ENCODE measurements at regions of chr6 and their contacts with region 1.

Region 1: DNA sequence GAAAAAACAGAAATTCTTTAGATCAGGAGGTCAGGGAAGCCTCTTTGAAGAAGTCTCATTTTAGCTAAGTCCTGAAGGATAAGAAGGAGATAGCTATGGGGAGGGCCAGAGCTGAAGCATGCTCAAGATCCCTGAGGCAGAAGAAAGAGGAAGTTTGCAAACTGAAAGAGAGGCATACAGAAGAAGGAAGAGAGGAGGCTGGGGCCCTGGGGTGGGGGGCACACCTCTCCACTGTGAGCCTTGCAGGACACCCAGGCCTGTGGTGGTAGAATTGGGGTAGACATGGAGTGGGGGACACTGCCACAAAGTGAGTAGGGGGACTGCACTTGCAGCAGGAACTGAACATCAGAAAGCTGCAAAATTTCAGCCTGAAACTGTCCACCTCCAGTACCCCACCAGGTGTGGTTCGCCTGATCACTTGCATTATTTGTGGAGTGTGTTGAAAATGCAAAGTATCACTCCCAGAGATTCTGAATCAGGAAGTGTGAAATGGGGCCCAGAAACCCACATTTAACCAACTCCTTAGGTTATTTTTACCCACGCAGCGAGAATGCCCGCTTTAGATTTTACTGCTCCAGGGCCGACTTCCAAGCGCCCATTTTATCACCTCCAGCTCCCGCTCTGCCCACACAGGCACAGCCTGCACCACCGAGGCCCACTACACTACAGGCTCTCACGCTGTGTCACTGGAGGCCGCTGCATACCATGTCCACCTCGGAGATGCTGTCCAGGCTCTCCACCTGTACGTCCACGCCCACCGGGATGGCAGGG is 44.0 kb downstream of the GABRR2 start:
- DNase-seq: peak; percentile 60
- H3K4me3 ChIP-seq: peak overlapping the region; percentile 11
- H3K27ac ChIP-seq: peak overlapping the region; percentile 8
- H3K4me1 ChIP-seq: peaks cover 23% of the 10 kb centered on the region
- CTCF ChIP-seq: no peak

Region 2: DNA sequence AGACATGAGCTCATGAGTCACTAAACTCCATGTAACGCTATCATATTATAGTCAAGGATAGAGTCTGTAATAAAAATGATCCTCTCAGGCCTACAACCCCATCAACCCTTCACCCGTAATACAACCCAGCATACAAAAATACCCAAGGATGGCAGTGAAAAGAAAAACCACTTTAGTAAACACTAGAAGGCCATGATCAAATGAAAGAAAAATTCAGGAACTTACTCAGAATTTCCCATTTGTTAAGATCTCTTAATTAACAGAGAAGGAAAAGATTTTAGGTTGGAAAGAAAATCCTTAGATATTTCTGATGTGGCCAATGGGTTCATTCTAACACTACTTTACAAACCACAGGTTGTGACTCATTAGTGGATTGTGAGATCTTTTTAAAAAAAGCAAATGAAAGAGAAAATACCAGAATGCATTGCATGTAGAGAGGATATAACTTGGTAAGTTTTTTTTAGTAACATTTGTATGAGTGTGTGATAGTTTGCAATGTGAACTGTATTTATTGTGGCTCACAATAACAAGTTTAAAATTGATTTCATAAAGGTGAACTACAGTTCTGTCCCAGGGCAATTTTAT is 89.4 kb after region 1 on chr6:
- CTCF ChIA-PET with region 1: no interaction called
- POLR2A ChIA-PET with region 1: no interaction called
- intact Hi-C with region 1: no loop called
- DNase-seq: no peak
- H3K4me3 ChIP-seq: no peak overlapping the region
- H3K27ac ChIP-seq: peak overlapping the region; percentile 47
- H3K4me1 ChIP-seq: peaks cover 83% of the 10 kb centered on the region
- CTCF ChIP-seq: no peak

Region 3: DNA sequence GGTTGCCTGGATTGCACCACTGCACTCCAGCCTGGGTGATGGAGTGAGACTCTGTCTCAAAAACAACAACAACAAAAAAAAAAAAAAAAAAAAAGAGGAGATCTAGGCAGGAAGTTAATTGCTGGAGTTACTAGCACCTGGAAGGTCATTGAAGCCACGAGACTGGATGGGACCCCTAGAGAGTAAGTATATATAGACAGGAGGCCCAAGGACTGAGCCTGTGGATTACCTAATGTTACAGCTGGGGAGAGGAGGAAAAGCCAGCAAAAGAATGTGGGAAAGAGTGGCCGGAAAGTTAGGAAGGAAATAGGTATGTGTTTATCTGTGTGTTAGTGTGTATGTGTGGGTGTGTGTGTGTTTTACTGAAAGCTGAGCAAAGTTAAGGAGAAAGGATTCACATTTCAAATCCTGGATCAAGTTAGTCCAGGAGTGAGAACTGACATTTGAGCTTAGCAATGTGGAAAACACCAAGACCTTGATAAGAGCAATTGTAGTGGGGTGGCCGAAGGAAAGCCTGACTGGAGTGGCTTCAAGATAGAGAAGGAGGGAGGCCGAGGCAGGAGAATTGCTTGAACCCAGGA is 200.2 kb after region 1 on chr6:
- CTCF ChIA-PET with region 1: interaction called, 10 read pairs
- POLR2A ChIA-PET with region 1: interaction called, 3 read pairs
- intact Hi-C with region 1: no loop called
- DNase-seq: no peak
- H3K4me3 ChIP-seq: no peak overlapping the region
- H3K27ac ChIP-seq: no peak overlapping the region
- H3K4me1 ChIP-seq: no peaks in the 10 kb centered on the region
- CTCF ChIP-seq: no peak

Measured in OCI-LY7 (cell line).